GM13977 (cell line): ENCODE measurements at regions of chrX and their contacts with region 1.

Region 1: GRCh38 chrX:49878834-49879659 is at the start of gene USP27X:
- DNase-seq: peak; percentile 83
- CTCF ChIP-seq: peak; percentile 41

Region 2: GRCh38 chrX:49059209-49060191 is 819.5 kb before region 1 on chrX:
- in situ Hi-C with region 1: no loop called
- DNase-seq: no peak
- CTCF ChIP-seq: no peak

Region 3: GRCh38 chrX:50565718-50566117 is 686.7 kb after region 1 on chrX:
- in situ Hi-C with region 1: loop called (anchors 25 kb)
- DNase-seq: no peak
- CTCF ChIP-seq: no peak